Aorta (tissue), 5 donors: ENCODE measurements at regions of chrX and their contacts with region 1.

Region 1: GRCh38 chrX:40647307-40648197 is at the start of gene CXorf38:
- DNase-seq: peak; percentile 97 to 98
- ATAC-seq: peak; percentile 91
- H3K4me3 ChIP-seq: peak within 1 kb of the TSS; percentile 62 to 73
- H3K27ac ChIP-seq: peak within 1 kb of the TSS in 1 of 2 donors; percentile 62
- H3K4me1 ChIP-seq: peaks cover 0 to 2% of the 10 kb centered on the region in 2 donors
- H3K27me3 ChIP-seq: no peaks in the 10 kb centered on the region
- total RNA-seq, gene CXorf38: 11.1 to 13.2 TPM

Region 2: GRCh38 chrX:40224658-40225057 is 422.9 kb before region 1 on chrX:
- intact Hi-C with region 1: no loop called
- DNase-seq: no peak
- ATAC-seq: no peak
- H3K4me3 ChIP-seq: no peak overlapping the region
- H3K27ac ChIP-seq: no peak overlapping the region
- H3K4me1 ChIP-seq: no peaks in the 10 kb centered on the region
- H3K27me3 ChIP-seq: no peaks in the 10 kb centered on the region

Region 3: DNA sequence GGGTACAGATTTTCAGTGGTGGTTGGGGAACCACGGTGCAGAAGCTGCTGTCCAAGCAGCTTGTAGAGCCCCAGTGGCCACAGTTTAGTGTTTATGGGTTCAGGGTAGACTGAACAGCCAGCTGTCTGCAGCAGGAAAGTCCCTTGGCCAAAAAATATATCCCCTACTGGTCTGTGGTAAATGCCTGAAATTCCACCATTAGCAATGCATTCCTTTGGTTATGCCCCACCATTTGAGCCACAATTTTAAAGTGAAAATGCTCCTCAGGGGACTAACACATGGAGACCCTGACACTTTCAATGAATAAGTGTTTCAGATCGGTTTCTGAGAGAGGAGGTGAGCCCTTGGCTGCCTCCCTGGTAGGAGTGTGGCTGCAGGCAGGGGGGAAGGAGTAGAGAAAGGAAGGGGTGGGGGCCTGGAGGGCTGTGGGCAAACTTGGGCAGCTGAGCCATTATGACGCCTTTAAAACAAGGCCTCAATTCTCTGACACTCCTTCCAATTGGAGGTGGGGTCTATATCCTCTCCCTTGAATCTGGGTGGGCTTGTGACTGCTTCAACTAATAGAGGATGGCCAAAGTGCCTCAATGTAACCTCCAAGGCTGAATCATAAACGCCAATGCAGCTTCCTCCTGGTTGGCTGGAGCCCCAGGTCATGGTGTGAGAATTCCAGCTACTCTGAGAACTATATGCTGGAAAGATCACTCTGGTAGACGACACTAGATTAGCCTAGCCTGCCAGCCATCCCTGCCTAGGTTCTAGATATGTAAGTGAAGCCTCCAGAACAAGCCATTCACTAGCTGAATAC is 142.5 kb before region 1 on chrX:
- intact Hi-C with region 1: no loop called
- DNase-seq: no peak
- ATAC-seq: no peak
- H3K4me3 ChIP-seq: no peak overlapping the region
- H3K27ac ChIP-seq: no peak overlapping the region
- H3K4me1 ChIP-seq: no peaks in the 10 kb centered on the region
- H3K27me3 ChIP-seq: peaks cover 0 to 1% of the 10 kb centered on the region in 2 donors

Region 4: DNA sequence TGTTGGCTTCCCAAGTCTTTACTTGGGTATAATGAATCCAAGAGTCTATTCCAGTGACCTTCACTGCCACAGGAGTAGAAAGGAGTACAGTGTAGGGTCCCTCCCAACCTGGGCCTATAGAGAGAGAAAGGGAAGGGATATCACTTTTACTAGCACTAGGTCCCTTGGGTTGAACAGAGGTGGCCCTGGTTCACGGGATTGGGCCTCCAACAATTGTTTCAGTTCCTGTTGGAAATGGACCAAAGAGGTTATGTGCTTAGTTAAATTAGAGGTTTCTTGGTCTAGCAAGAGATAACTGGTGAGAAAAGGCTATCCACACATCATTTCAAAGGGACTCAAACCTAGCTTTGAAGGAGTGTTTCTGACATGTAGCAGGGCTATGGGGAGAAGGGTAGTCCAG is 144.9 kb after region 1 on chrX:
- intact Hi-C with region 1: loop called (anchors 5 kb)
- DNase-seq: no peak
- ATAC-seq: no peak
- H3K4me3 ChIP-seq: no peak overlapping the region
- H3K27ac ChIP-seq: no peak overlapping the region
- H3K4me1 ChIP-seq: no peaks in the 10 kb centered on the region
- H3K27me3 ChIP-seq: no peaks in the 10 kb centered on the region

Region 5: GRCh38 chrX:41084044-41084892 is 436.7 kb after region 1 on chrX:
- intact Hi-C with region 1: loop called in 1 of 2 experiments (anchors 10 kb)
- DNase-seq: peak; percentile 98 to 100
- ATAC-seq: peak; percentile 94
- H3K4me3 ChIP-seq: peak overlapping the region; percentile 88 to 95
- H3K27ac ChIP-seq: peak overlapping the region in 1 of 2 donors; percentile 95
- H3K4me1 ChIP-seq: no peaks in the 10 kb centered on the region
- H3K27me3 ChIP-seq: no peaks in the 10 kb centered on the region

Region 6: GRCh38 chrX:41116948-41117347 is 469.4 kb after region 1 on chrX:
- intact Hi-C with region 1: loop called (anchors 5 to 10 kb)
- DNase-seq: no peak
- ATAC-seq: no peak
- H3K4me3 ChIP-seq: no peak overlapping the region
- H3K27ac ChIP-seq: no peak overlapping the region
- H3K4me1 ChIP-seq: no peaks in the 10 kb centered on the region
- H3K27me3 ChIP-seq: no peaks in the 10 kb centered on the region

Region 7: DNA sequence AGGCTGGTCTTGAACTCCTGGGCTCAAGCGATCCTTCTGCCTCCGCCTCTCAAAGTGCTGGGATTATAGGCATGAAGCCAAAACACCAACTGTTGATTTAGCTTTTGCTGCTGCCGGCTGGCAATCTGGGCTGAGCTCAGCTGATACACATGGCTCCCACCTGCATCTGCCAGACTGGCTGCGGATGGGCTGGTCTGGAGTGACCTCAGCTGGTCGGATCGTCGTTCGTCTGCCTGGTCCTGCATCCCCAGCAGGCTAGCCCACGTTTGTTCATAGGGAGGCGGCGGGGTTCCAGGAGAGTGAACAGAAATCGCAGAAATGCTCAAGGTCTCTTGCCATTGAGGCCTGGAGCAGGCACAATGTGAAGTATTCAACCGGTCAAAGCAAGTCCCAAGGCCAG is 612.0 kb after region 1 on chrX:
- intact Hi-C with region 1: loop called in 1 of 2 experiments (anchors 10 kb)
- DNase-seq: peak in 1 of 2 donors; percentile 53
- ATAC-seq: no peak
- H3K4me3 ChIP-seq: no peak overlapping the region
- H3K27ac ChIP-seq: no peak overlapping the region
- H3K4me1 ChIP-seq: no peaks in the 10 kb centered on the region
- H3K27me3 ChIP-seq: no peaks in the 10 kb centered on the region